ENCODE measurements at regions of chr1 and their contacts with region 1.

Region 1: GRCh38 chr1:224141693-224142092 is 27.8 kb downstream of the FBXO28 start:
- DNase-seq: no peak
- ATAC-seq: no peak
- H3K4me3 ChIP-seq: no peak overlapping the region
- H3K27ac ChIP-seq: no peak overlapping the region
- H3K4me1 ChIP-seq: no peaks in the 10 kb centered on the region
- H3K27me3 ChIP-seq: no peaks in the 10 kb centered on the region
- CTCF ChIP-seq: no peak

Region 2: DNA sequence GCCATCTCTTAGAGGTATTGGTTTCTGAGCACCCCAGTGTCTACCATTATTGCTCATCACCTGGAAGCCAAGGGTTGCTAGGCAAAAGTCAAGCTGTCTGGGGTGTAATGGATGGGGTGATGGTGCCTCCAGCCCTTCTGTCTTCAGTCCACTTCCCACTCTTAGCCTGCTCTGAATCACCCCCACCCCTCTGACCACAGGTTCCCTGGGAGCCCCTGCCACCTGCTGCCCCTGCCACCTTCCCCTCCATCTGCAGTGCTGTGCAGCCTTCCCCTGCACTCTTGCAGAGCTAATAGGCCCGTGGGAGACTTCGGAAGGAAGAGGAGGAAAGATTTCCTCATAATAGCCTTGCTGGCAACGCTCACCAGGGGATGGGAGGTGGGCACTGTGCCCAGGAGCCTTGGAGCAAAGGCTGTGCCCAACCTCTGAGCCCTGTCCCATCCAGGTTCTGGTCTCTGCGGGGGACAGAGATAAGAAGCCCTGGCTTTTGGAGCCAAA is 393.8 kb before region 1 on chr1:
- CTCF ChIA-PET with region 1: no interaction called
- POLR2A ChIA-PET with region 1: no interaction called
- in situ Hi-C with region 1: no loop called
- intact Hi-C with region 1: no loop called
- DNase-seq: no peak
- ATAC-seq: peak; percentile 65
- H3K4me3 ChIP-seq: no peak overlapping the region
- H3K27ac ChIP-seq: peak overlapping the region; percentile 32
- H3K4me1 ChIP-seq: peaks cover 14% of the 10 kb centered on the region
- H3K27me3 ChIP-seq: no peaks in the 10 kb centered on the region
- CTCF ChIP-seq: no peak

Region 3: DNA sequence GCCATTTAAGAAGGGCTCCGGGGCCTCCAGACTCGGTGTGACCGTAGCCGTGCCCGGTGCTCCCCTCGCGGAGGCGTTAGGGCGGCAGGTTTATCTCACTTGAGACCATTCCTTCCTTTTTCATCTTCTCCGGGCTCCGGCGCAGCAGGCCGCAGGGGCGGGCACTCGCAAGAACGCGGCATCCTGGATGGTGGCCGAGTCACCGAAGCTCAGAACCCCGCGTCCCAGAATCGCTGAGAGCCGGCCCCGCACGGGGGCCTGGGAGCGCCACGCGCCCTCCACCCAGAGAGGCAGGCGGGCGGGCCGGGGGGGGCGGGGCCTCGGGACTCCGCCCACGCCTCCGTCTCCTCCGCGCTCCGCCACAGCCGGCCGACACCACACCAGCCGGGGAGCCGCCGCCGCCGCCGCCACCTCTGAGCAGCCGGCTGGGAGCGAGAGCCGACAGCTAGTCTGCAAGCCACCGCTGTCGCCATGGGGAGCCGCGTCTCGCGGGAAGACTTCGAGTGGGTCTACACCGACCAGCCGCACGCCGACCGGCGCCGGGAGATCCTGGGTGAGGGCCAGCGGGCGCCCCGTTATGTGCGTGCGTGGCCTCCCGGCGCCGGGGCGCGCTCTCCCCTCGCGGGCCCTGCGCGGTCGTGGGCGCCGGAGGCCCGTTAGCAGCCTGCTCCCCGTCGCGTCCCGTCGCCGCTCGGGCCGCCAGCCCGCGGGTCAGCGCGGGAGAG is 41.3 kb after region 1 on chr1 and contains the start of gene DEGS1:
- CTCF ChIA-PET with region 1: no interaction called
- POLR2A ChIA-PET with region 1: interaction called, 17 read pairs
- in situ Hi-C with region 1: no loop called
- intact Hi-C with region 1: no loop called
- DNase-seq: no peak
- ATAC-seq: peak; percentile 95
- H3K4me3 ChIP-seq: peak within 1 kb of the TSS; percentile 81 to 87
- H3K27ac ChIP-seq: peak within 1 kb of the TSS; percentile 88
- H3K4me1 ChIP-seq: 0 out of 2 replicates have a peak, but pooled peaks cover 6% of the 10 kb centered on the region
- H3K27me3 ChIP-seq: no peaks in the 10 kb centered on the region
- CTCF ChIP-seq: no peak
- total RNA-seq, gene DEGS1: 82.8 TPM

Measured in Panc1 (cell line).